GM18951 (cell line): ENCODE measurements at regions of chr5 and their contacts with region 1.

Region 1: DNA sequence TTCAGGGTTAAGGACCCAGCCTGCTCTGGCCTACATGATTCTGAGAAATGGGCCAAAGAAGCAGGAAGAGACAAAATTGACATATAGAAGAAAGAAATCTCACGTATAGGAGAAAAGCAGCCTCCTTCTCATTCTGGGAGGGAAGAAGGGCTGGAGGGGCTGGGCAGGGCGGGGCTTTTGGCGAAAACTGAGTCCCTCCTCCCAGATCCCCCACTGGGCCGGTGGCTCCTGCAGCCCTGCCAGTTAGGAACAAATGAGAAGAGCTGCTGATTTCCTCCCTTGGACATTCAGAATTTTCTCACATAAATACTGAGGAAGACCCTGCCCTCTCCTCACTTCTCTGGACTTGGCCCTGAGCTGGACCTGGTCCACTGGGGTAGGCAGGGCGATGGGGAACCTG is at the start of gene WNT8A:
- POLR2A ChIP-seq: no peak

Region 2: GRCh38 chr5:138138949-138139780 is 55.5 kb after region 1 on chr5 and contains the start of gene NME5:
- in situ Hi-C with region 1: loop called (anchors 10 kb)
- POLR2A ChIP-seq: no peak